ENCODE measurements at regions of chr5 and their contacts with region 1.

Region 1: DNA sequence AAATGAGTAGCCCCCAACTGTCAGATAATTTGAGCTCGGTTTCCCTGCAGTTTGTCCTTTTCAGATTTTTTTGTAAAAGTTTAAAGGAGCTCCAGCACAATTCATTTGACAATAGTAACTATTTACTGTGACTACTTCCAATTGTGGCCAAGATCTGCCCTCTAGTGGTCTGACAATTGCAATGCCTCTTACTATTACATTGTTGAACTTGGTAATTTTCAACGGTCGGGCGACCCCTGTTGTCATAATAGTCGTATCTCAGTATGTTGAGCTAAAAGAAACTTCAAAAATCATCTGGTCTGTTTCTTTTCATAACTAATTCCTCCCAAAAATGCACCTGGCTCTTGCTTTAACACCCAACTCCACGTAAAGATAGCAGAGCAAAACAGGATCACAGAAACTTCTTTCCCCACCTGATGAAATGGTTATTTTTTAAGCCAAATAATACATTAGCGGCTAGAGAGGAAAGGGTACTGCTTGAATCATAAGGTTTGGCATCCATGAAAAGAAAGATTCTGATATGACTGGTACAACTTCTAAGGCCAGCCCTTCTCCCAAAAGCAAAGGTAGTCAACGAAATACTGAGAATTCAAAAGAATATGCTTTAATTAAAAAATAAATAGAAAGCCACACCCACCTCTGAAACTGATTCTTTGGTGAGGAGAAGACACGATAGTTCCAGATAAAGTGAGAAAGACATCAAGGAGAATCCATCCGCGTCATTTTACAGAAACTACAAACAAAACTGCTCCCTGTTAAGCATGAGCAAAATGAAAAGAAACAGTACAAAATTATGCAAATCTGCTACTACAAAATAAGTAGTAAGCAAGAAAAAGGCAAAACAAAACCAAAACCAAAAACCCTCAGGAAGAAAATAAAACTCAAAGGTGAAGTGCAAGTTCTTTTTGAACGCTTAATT is 76.9 kb upstream of the HTR4 start:
- DNase-seq: peak; percentile 52
- H3K4me3 ChIP-seq: no peak overlapping the region; a peak in 1 of 4 replicates
- H3K27ac ChIP-seq: peak overlapping the region in 1 of 2 experiments; percentile 56; a peak in 2 of 4 replicates
- H3K4me1 ChIP-seq: peaks cover 0 to 15% of the 10 kb centered on the region in 2 experiments; a peak in 3 of 4 replicates
- H3K27me3 ChIP-seq: no peaks in the 10 kb centered on the region
- CTCF ChIP-seq: peak; percentile 99
- EP300 ChIP-seq: no peak
- RAD21 ChIP-seq: peak; percentile 99

Region 2: GRCh38 chr5:148374692-148375360 is 356.4 kb before region 1 on chr5:
- CTCF ChIA-PET with region 1: interaction called, 22 read pairs
- POLR2A ChIA-PET with region 1: no interaction called
- DNase-seq: peak; percentile 31
- H3K4me3 ChIP-seq: no peak overlapping the region
- H3K27ac ChIP-seq: no peak overlapping the region
- H3K4me1 ChIP-seq: no peaks in the 10 kb centered on the region
- H3K27me3 ChIP-seq: no peaks in the 10 kb centered on the region
- CTCF ChIP-seq: peak; percentile 66
- EP300 ChIP-seq: no peak
- RAD21 ChIP-seq: peak; percentile 82

Region 3: DNA sequence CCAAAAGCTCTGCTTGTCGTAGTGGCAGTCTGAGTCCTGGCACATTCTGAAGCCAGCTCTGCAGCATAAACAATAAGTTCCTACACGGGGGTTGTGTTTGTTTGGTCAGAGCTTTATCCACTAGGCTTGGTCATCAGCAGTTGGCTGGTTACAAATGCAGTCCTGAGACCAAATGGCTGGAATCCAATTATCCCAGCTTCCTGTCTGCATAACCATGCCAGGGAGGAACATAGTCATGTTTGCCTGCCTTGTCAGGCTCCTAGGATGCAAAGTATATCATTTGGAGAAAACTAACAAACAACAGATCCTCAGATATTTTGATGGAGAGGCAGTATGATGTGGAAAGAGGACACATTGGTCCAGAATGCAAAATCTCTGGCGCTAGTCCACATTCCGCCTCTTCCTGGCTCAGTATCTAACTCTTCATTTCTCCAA is 261.7 kb before region 1 on chr5:
- CTCF ChIA-PET with region 1: interaction called, 26 read pairs
- POLR2A ChIA-PET with region 1: no interaction called
- DNase-seq: no peak
- H3K4me3 ChIP-seq: no peak overlapping the region
- H3K27ac ChIP-seq: peak overlapping the region in 1 of 2 experiments; percentile 90; a peak in 2 of 4 replicates
- H3K4me1 ChIP-seq: peaks cover 3 to 4% of the 10 kb centered on the region in 2 experiments; a peak in 1 of 4 replicates
- H3K27me3 ChIP-seq: no peaks in the 10 kb centered on the region
- CTCF ChIP-seq: no peak
- EP300 ChIP-seq: no peak
- RAD21 ChIP-seq: no peak

Region 4: DNA sequence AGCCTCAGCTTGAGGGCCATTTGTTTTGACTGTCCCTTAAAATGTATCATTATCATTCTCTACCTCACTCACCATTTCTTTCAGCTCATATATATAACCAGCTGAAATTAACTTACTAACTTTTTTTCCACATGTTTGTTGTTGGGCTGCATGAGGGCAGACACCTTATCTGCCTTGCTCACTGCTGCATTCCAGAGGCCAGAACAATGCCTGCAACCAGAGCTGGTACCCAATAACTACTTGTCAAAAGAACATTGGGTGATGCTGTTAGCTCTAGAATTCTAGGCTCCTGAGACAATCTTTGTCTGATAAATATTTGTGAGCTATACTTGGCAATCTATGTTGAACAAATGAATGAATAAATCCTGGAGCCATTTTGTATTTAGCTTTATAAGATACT is 145.2 kb before region 1 on chr5:
- CTCF ChIA-PET with region 1: interaction called, 11 read pairs
- POLR2A ChIA-PET with region 1: no interaction called
- DNase-seq: no peak
- H3K4me3 ChIP-seq: no peak overlapping the region
- H3K27ac ChIP-seq: no peak overlapping the region
- H3K4me1 ChIP-seq: no peaks in the 10 kb centered on the region
- H3K27me3 ChIP-seq: no peaks in the 10 kb centered on the region
- CTCF ChIP-seq: peak; percentile 19; the same call in 1 of the 2 replicates
- EP300 ChIP-seq: no peak
- RAD21 ChIP-seq: no peak

Region 5: DNA sequence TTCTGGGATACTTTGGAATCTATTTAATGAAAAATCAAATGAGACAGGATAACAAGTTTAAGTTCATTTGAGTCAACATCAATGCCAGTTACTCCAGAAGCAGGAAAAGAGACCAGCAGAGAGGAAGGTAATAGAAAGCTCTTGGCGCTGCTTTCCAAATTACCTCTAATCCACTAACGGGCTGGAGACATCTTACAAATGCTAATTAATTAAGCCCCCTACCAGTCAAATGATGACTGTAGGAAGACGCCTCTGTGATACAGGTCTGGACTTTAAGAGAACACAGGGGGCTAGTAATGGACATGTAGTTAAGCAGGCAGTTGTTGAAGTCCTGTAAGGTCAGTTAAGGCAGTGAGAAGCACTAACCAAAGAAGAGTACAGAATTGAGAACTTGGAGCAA is 11.6 kb before region 1 on chr5:
- CTCF ChIA-PET with region 1: interaction called, 110 read pairs
- POLR2A ChIA-PET with region 1: no interaction called
- DNase-seq: no peak
- H3K4me3 ChIP-seq: no peak overlapping the region
- H3K27ac ChIP-seq: no peak overlapping the region
- H3K4me1 ChIP-seq: peaks cover 0 to 2% of the 10 kb centered on the region in 2 experiments; a peak in 1 of 4 replicates
- H3K27me3 ChIP-seq: no peaks in the 10 kb centered on the region; the same call in 1 of the 2 replicates
- CTCF ChIP-seq: no peak
- EP300 ChIP-seq: no peak
- RAD21 ChIP-seq: no peak

Region 6: GRCh38 chr5:149005077-149005892 is 274.1 kb after region 1 on chr5:
- CTCF ChIA-PET with region 1: interaction called, 16 read pairs
- POLR2A ChIA-PET with region 1: no interaction called
- DNase-seq: peak; percentile 70
- H3K4me3 ChIP-seq: no peak overlapping the region
- H3K27ac ChIP-seq: no peak overlapping the region
- H3K4me1 ChIP-seq: peaks cover 7 to 12% of the 10 kb centered on the region in 2 experiments; a peak in 3 of 4 replicates
- H3K27me3 ChIP-seq: no peaks in the 10 kb centered on the region
- CTCF ChIP-seq: no peak
- EP300 ChIP-seq: peak; percentile 80 to 93
- RAD21 ChIP-seq: no peak